AG04449 (cell line): ENCODE measurements at regions of chr12 and their contacts with region 1.

Region 1: GRCh38 chr12:9707864-9708808 is 24.8 kb downstream of the CLECL1 start:
- DNase-seq: no peak
- H3K4me3 ChIP-seq: no peak overlapping the region
- CTCF ChIP-seq: peak; percentile 70

Region 2: GRCh38 chr12:9634177-9634803 is 73.8 kb before region 1 on chr12:
- CTCF ChIA-PET with region 1: interaction called, 245 read pairs
- POLR2A ChIA-PET with region 1: no interaction called
- DNase-seq: no peak
- H3K4me3 ChIP-seq: no peak overlapping the region
- CTCF ChIP-seq: peak; percentile 57

Region 3: DNA sequence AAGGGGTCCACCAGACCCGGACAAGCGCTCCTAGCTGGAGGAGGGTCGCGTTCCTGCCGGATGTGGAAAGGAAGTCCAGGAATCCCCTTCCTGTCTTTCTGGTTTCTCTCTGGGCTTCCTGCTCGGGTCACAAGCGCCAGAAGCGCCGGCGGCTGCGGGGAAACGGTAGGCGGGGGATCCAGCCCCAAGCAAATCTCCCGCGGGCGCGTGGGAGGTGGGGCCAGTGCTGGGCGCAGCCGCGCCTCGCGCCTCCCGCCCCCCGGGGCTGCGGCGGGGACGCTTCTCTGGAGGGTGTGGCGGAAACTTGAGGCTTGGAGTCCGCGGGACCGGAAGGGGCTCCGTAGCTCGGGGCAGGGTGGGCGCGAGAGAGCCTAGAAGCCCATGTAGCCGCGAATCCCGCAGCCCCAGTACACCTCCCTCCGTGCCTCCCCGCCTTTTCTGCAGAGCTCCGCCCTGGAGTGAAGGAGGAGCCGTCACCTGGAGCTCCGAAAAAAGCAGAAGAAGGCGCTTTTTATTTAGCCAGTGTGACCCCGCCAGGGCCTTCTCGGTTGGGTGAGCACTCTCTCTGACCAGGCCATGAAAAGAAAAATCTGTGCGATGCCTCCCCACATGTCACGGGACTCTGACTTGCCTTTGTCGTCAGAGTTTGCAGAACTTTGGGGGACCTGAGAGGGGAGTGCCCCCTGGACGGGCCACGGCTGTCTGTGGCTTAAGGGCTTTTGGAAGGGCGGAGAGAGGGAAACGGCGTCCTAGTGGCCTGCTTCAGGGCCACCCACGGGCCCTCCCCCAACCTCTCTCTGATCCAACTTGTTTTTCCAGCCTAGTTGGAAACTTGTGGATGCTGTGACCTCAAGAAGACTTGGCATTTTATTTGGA is 60.1 kb before region 1 on chr12:
- CTCF ChIA-PET with region 1: interaction called, 245 read pairs
- POLR2A ChIA-PET with region 1: no interaction called
- DNase-seq: no peak
- H3K4me3 ChIP-seq: peak overlapping the region; percentile 74
- CTCF ChIP-seq: no peak

Region 4: DNA sequence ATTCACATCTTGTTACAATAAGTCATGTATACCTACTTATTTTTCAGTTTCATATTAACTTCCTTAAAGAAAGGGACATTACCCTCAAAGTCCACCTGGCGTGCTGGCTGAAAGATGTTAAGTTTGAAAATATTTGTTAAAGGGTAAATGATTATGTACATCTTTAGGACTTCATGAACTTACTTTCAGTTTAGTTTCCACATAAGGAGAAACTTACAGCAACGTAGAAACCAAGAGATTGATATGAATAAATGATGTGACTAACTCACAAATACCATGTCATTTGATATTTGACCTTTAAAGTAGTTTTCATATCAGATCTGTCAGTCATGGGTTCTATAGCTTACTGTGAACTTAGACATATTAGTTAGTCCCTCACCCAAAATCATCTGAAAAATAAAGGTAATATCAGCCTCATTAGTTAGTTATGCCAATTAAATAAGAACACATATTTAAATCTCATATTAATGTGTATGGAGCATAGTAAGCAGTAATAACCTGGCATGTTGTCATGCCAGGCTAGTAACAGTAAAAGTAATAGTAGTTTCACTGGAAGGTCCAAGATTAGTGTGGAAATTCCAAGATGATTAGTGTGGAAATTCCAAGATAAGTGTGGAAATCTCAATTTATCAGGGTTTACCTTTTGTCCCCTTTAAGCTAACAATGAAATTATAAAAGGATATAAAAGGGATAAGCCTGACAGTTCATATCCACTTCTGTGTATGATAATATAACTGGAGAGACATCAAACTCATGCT is 40.6 kb before region 1 on chr12:
- CTCF ChIA-PET with region 1: interaction called, 10 read pairs
- POLR2A ChIA-PET with region 1: no interaction called
- DNase-seq: no peak
- H3K4me3 ChIP-seq: no peak overlapping the region
- CTCF ChIP-seq: no peak

Region 5: GRCh38 chr12:9687228-9687627 is 20.9 kb before region 1 on chr12:
- CTCF ChIA-PET with region 1: interaction called, 24 read pairs
- POLR2A ChIA-PET with region 1: no interaction called
- DNase-seq: no peak
- H3K4me3 ChIP-seq: no peak overlapping the region
- CTCF ChIP-seq: no peak

Region 6: GRCh38 chr12:9721394-9722092 is 13.4 kb after region 1 on chr12:
- CTCF ChIA-PET with region 1: interaction called, 15 read pairs
- POLR2A ChIA-PET with region 1: no interaction called
- DNase-seq: no peak
- H3K4me3 ChIP-seq: no peak overlapping the region
- CTCF ChIP-seq: no peak

Region 7: GRCh38 chr12:9731797-9732196 is 23.7 kb after region 1 on chr12:
- CTCF ChIA-PET with region 1: interaction called, 11 read pairs
- POLR2A ChIA-PET with region 1: no interaction called
- DNase-seq: no peak
- H3K4me3 ChIP-seq: no peak overlapping the region
- CTCF ChIP-seq: no peak